ENCODE measurements at regions of chr14 and their contacts with region 1.

Region 1: GRCh38 chr14:21653331-21653885 is at the start of gene OR4E2:
- DNase-seq: no peak
- H3K4me3 ChIP-seq: no peak within 1 kb of the TSS
- H3K27ac ChIP-seq: no peak within 1 kb of the TSS
- H3K4me1 ChIP-seq: no peaks in the 10 kb centered on the region
- H3K27me3 ChIP-seq: no peaks in the 10 kb centered on the region
- CTCF ChIP-seq: no peak
- EP300 ChIP-seq: no peak
- POLR2A ChIP-seq: no peak
- total RNA-seq, gene OR4E2: not detected

Region 2: DNA sequence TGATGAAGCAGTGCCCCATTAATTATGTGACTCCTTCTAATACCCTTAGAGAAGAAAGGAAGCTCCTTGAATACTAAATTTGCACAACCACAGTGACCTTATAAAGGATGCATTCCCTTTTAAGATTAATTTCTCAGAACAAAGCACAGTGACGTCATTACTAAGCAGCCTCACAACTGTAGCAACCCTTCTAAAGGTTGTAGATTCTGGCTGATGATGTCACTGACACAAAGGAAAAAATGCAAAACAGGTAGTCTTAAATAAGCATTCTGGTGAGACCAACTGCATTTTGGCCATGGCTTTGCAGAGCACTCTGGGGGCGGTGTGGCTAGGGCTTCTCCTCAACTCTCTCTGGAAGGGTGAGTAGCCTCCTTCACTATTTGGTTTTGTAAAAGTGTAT is 58.6 kb after region 1 on chr14:
- intact Hi-C with region 1: loop called (anchors 2 kb)
- DNase-seq: no peak
- H3K4me3 ChIP-seq: no peak overlapping the region
- H3K27ac ChIP-seq: no peak overlapping the region
- H3K4me1 ChIP-seq: no peaks in the 10 kb centered on the region
- H3K27me3 ChIP-seq: no peaks in the 10 kb centered on the region
- CTCF ChIP-seq: no peak
- EP300 ChIP-seq: no peak
- POLR2A ChIP-seq: no peak